Endothelial cell of umbilical vein (primary cell): ENCODE measurements at regions of chr1 and their contacts with region 1.

Region 1: GRCh38 chr1:85607126-85607912 is 26.8 kb downstream of the CCN1 start:
- DNase-seq: peak; percentile 91
- H3K4me3 ChIP-seq: peak overlapping the region in 1 of 3 experiments; percentile 4
- H3K27ac ChIP-seq: peak overlapping the region; percentile 85
- H3K4me1 ChIP-seq: peaks cover 27% of the 10 kb centered on the region
- H3K27me3 ChIP-seq: no peaks in the 10 kb centered on the region
- CTCF ChIP-seq: no peak
- POLR2A ChIP-seq: peak; percentile 76

Region 2: DNA sequence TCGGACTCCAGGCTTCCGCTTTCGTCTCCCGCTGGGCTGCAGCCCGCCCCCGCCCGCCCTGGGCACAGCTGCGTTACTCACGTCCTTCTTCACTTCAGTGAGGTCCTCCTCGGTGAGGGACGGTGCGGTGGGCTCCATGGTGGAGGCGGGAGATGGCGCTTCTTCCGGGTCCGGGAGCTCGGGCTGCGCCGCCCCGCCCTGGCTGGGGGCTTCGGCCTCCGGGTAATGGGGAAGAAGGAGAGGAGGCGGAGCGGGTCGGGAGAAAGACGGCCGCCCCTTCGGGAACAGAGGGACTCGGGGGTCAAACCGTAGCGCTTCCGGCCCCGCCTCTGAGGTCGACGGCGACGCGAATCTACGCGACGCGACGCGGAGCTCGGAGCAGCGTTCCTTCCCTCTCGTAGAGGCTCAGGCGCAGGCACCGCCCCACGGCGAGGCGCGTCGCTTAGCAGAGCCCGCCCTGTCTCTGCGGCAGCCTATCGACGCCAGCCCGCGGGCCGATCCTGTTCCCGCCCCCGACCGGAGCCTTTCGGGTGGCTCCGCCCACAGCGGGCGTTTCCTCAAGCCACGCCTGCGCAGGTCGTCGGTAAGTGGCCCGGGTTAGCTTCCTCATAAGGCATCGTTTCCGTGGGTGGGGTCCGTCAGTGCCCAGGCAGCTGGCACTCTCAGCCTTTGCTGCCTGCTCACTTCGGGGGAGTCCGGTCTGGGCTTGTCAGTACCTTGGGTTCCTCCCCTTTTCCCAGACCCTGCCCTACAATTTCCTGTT is 330.9 kb before region 1 on chr1 and contains the start of gene BCL10:
- CTCF ChIA-PET with region 1: no interaction called
- POLR2A ChIA-PET with region 1: no interaction called
- dilution Hi-C with region 1: no loop called
- intact Hi-C with region 1: loop called (anchors 1 kb)
- DNase-seq: peak; percentile 99
- H3K4me3 ChIP-seq: peak within 1 kb of the TSS; percentile 95 to 99 (median 98)
- H3K27ac ChIP-seq: peak within 1 kb of the TSS; percentile 100
- H3K4me1 ChIP-seq: peaks cover 56% of the 10 kb centered on the region
- H3K27me3 ChIP-seq: no peaks in the 10 kb centered on the region
- CTCF ChIP-seq: no peak
- POLR2A ChIP-seq: peak; percentile 64
- total RNA-seq, gene BCL10: 74.5 and 78.6 TPM in 2 replicates

Region 3: GRCh38 chr1:85448358-85448757 is 159.0 kb before region 1 on chr1:
- CTCF ChIA-PET with region 1: no interaction called
- POLR2A ChIA-PET with region 1: no interaction called
- dilution Hi-C with region 1: no loop called
- intact Hi-C with region 1: loop called (anchors 1 kb)
- DNase-seq: peak; percentile 91
- H3K4me3 ChIP-seq: no peak overlapping the region
- H3K27ac ChIP-seq: peak overlapping the region; percentile 98
- H3K4me1 ChIP-seq: peaks cover 34% of the 10 kb centered on the region
- H3K27me3 ChIP-seq: no peaks in the 10 kb centered on the region
- CTCF ChIP-seq: no peak
- POLR2A ChIP-seq: no peak

Region 4: DNA sequence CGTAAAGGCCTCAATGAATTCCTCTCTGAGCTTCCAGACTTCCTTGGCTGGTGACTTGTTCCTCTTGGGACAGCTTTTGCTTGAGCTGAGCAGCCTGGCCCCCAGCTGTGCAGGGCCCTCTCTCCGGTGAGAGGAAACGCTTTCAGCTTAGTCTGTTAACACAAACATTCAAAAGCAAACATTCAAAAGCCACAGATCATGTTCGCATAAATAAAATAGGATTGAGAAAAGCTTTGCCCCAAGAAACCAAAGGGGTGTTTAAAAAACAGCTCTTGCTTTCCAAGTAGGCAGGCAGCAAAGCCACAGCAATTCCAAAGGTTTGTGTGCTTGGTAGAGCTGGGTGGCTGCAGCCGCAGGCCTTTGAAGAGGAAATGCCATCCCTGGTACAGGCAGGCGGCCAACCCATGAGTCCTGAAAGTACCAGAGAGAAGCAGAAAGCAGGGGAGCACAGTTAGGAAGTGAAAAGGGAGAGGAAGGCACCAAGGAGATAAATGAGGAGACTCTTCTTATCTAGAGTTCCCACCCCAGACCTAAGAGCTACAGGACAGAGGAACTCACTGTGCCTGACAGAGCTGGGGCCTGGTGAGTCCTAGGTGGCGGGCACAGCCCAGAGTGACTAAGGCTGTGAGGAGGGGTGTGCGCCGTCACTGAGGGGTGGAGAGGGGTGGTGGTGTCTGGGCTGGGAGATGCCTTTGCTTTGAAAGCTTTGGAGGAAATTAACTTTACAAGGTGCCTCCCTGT is 21.6 kb after region 1 on chr1:
- CTCF ChIA-PET with region 1: interaction called, 16 read pairs
- POLR2A ChIA-PET with region 1: interaction called, 3 read pairs
- dilution Hi-C with region 1: no loop called
- intact Hi-C with region 1: loop called (anchors 1 kb)
- DNase-seq: peak; percentile 81
- H3K4me3 ChIP-seq: peak overlapping the region in 1 of 3 experiments; percentile 7
- H3K27ac ChIP-seq: peak overlapping the region; percentile 76
- H3K4me1 ChIP-seq: peaks cover 25% of the 10 kb centered on the region
- H3K27me3 ChIP-seq: no peaks in the 10 kb centered on the region
- CTCF ChIP-seq: no peak
- POLR2A ChIP-seq: no peak